A673 (cell line): ENCODE measurements at regions of chr6 and their contacts with region 1.

Region 1: DNA sequence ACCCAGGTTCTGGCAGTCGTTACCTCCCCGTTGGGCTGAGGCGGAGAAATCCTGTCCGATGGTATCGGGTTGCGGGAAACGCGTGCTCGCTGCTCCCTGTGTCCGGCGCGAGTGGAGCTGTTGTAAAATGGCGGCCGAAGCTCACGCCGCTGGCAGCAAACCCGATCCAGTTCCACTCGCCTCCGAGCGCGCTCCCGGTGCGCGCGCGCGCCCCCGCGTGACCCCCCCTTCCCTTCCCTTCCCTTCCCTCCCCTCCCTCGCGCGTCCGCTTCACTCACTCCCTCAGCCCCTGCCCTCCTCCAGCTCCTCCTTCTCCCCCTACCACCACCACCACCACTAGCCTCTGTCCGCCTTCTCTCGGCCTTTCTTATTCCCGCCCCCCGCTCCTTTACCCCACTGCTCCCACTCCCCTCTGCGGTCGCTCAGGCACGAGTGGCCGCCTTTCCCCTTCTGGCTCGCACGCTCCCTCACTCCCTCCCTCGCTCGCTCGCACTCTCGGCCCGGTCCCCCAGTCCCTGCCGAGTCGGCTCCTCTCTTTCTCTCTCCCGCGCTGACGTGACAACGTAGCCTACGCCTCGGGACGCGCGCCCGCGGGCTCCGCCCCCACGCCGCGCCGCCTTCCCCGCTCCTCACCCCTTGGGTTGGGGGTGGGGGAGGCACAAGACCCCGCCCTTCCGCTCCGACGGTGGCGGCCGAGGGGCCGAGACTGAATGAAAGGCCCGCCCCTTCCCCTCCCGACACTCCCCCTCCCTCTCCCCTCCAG is at the start of gene SYNCRIP:
- DNase-seq: peak; percentile 99
- H3K4me3 ChIP-seq: peak within 1 kb of the TSS; percentile 98
- H3K27ac ChIP-seq: peak within 1 kb of the TSS; percentile 100
- H3K4me1 ChIP-seq: peaks cover 31% of the 10 kb centered on the region
- H3K27me3 ChIP-seq: no peaks in the 10 kb centered on the region
- CTCF ChIP-seq: no peak
- total RNA-seq, gene SYNCRIP: 191 and 221 TPM in 2 replicates

Region 2: GRCh38 chr6:85669735-85670194 is 26.8 kb after region 1 on chr6:
- CTCF ChIA-PET with region 1: no interaction called
- POLR2A ChIA-PET with region 1: interaction called, 20 read pairs
- intact Hi-C with region 1: no loop called
- DNase-seq: no peak
- H3K4me3 ChIP-seq: no peak overlapping the region
- H3K27ac ChIP-seq: no peak overlapping the region
- H3K4me1 ChIP-seq: peaks cover 7% of the 10 kb centered on the region
- H3K27me3 ChIP-seq: no peaks in the 10 kb centered on the region
- CTCF ChIP-seq: no peak

Region 3: GRCh38 chr6:85678602-85679444 is 35.9 kb after region 1 on chr6:
- CTCF ChIA-PET with region 1: no interaction called
- POLR2A ChIA-PET with region 1: interaction called, 37 read pairs
- intact Hi-C with region 1: loop called (anchors 1 kb)
- DNase-seq: peak; percentile 99
- H3K4me3 ChIP-seq: peak overlapping the region; percentile 72
- H3K27ac ChIP-seq: peak overlapping the region; percentile 98
- H3K4me1 ChIP-seq: peaks cover 11% of the 10 kb centered on the region
- H3K27me3 ChIP-seq: no peaks in the 10 kb centered on the region
- CTCF ChIP-seq: no peak